Keratinocyte (primary cell): ENCODE measurements at regions of chr3 and their contacts with region 1.

Region 1: GRCh38 chr3:42961633-42962032 is 17.5 kb upstream of the GASK1A start:
- DNase-seq: no peak
- H3K4me3 ChIP-seq: no peak overlapping the region
- H3K27ac ChIP-seq: no peak overlapping the region
- H3K4me1 ChIP-seq: no peaks in the 10 kb centered on the region
- H3K27me3 ChIP-seq: no peaks in the 10 kb centered on the region
- CTCF ChIP-seq: peak; percentile 56 to 59 (median 58)

Region 2: DNA sequence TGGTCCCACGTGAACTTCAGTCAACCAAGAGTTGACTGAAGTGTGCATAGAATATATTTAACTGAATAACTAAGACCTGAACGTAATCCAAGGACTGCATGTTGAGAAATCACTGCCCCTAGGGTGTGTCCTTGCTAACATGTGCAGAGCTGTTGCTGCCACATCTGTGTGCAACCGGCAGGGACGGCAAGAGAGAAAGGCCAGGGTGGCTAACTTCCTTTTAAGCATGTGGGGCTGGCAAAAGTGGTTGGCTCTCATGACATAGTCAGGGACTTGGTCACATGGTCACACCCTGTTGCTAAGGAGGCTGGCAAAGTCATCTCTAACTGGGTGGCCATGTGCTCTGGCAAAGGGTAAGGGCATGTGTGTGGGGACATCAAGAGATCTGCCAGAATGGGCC is 69.9 kb after region 1 on chr3:
- dilution Hi-C with region 1: no loop called
- DNase-seq: no peak
- H3K4me3 ChIP-seq: no peak overlapping the region
- H3K27ac ChIP-seq: no peak overlapping the region
- H3K4me1 ChIP-seq: no peaks in the 10 kb centered on the region
- H3K27me3 ChIP-seq: no peaks in the 10 kb centered on the region
- CTCF ChIP-seq: peak in 1 of 3 experiments; percentile 16

Region 3: GRCh38 chr3:43132870-43133636 is 171.4 kb after region 1 on chr3:
- dilution Hi-C with region 1: no loop called
- DNase-seq: no peak
- H3K4me3 ChIP-seq: no peak overlapping the region
- H3K27ac ChIP-seq: no peak overlapping the region
- H3K4me1 ChIP-seq: no peaks in the 10 kb centered on the region
- H3K27me3 ChIP-seq: peaks cover 5% of the 10 kb centered on the region
- CTCF ChIP-seq: no peak

Region 4: DNA sequence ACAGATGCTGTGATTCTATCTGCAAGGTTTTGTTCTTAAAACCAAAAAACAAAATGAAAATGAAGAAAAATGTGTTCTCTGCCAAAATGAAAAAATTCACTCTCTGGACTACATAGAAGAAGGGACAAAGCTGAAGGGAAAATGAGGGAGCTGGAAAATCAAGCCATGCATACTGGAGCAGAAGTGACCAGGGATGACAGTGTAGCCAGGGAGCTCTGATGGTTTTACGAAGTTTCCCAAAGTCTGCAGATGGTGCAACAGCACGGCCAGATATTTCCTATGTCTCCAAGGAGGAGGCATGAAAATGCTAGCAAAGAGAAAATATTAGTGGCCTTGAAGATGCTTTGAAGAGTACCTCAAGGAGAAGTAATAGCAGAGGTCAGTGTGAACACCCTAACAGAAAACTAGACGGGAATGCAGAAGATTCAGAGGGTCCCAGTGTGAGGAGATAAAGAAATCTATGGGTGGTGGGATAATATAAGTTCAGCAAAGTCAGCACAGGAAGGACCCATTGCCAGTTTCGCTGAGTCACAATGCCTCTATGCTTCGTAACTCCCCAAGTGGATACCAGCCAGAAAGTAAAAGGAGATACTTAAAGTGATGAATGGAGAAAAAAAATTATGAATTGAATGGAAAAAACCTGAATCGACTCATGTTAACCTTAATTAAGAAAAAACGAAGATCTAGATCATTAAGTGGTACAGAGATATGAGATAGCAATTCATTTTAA is 183.3 kb after region 1 on chr3:
- dilution Hi-C with region 1: loop called (anchors 10 kb)
- DNase-seq: no peak
- H3K4me3 ChIP-seq: no peak overlapping the region
- H3K27ac ChIP-seq: no peak overlapping the region
- H3K4me1 ChIP-seq: no peaks in the 10 kb centered on the region
- H3K27me3 ChIP-seq: peaks cover 4% of the 10 kb centered on the region
- CTCF ChIP-seq: no peak

Region 5: DNA sequence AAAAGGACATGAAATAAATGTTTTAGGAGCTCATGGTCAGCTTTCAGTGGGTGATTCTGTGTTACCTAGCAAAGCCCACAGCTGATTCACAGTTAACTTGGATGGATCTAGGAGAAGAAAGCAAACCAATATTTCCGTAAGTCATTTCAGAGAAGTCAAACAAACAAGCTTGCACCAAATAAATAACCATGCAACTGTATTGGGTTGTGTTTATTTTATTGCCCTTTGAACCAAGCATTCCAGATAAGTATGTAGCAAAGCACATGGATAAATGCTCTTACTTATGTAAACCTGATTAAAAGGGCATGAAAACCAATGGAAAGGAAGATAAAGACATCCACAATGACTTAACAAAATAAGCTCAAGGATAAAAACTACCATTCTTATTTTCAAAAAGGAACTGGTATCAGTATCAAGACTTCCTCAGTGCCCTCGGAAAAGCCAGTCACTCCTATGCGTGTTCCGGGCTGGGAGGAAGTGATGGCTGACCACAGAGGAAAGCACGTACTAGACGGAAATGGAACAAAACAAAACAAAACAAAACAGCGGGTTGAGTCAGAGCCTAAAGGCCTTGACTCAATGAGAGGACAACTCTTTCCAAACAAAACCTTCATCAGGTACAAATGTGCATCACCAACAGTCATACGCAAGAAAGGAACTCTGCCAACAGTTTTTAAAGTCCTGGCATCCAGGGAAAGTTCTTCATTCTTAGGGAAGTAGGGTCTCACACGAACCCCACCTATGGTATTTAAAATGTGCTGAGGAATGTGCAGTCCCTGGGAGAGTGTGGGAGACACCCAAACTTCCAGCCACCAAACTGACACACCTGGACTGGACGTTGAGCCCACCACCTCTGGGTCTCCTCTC is 428.0 kb after region 1 on chr3:
- dilution Hi-C with region 1: no loop called
- DNase-seq: peak; percentile 26
- H3K4me3 ChIP-seq: no peak overlapping the region
- H3K27ac ChIP-seq: peak overlapping the region; percentile 61
- H3K4me1 ChIP-seq: peaks cover 12% of the 10 kb centered on the region
- H3K27me3 ChIP-seq: no peaks in the 10 kb centered on the region
- CTCF ChIP-seq: no peak